ENCODE measurements at regions of chr22 and their contacts with region 1.

Region 1: GRCh38 chr22:26461188-26461810 is 22.3 kb downstream of the HPS4 start:
- DNase-seq: peak; percentile 56
- H3K4me3 ChIP-seq: no peak overlapping the region
- H3K27ac ChIP-seq: no peak overlapping the region
- H3K4me1 ChIP-seq: no peaks in the 10 kb centered on the region
- H3K27me3 ChIP-seq: no peaks in the 10 kb centered on the region
- CTCF ChIP-seq: peak; percentile 86

Region 2: DNA sequence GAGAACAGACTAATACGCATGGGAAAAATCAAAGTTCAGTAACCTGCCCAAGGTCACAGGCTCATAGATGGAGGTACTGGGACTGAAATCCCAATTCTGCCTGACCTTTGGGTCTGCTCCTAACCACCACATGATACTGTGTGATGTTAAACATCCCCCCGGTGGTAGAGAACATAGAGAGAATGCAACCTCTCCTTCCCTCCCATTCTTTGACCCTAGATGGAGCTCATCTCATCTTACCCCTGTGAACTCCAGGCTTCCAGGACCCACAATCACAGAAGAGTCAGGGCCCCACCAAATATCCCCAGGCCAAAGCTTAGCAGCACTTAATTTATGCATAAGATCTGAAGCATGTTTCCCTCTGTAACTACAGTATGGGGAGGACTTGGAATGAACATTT is 520.8 kb before region 1 on chr22:
- CTCF ChIA-PET with region 1: no interaction called
- POLR2A ChIA-PET with region 1: no interaction called
- intact Hi-C with region 1: no loop called
- DNase-seq: no peak
- H3K4me3 ChIP-seq: no peak overlapping the region
- H3K27ac ChIP-seq: no peak overlapping the region
- H3K4me1 ChIP-seq: no peaks in the 10 kb centered on the region
- H3K27me3 ChIP-seq: peaks cover 14% of the 10 kb centered on the region
- CTCF ChIP-seq: no peak

Region 3: GRCh38 chr22:26364066-26365015 is 97.0 kb before region 1 on chr22:
- CTCF ChIA-PET with region 1: interaction called, 13 read pairs
- POLR2A ChIA-PET with region 1: no interaction called
- intact Hi-C with region 1: no loop called
- DNase-seq: peak; percentile 87
- H3K4me3 ChIP-seq: no peak overlapping the region
- H3K27ac ChIP-seq: no peak overlapping the region
- H3K4me1 ChIP-seq: peaks cover 11% of the 10 kb centered on the region
- H3K27me3 ChIP-seq: peaks cover 12% of the 10 kb centered on the region
- CTCF ChIP-seq: peak; percentile 74

Region 4: GRCh38 chr22:26391623-26392022 is 69.7 kb before region 1 on chr22:
- CTCF ChIA-PET with region 1: interaction called, 11 read pairs
- POLR2A ChIA-PET with region 1: no interaction called
- intact Hi-C with region 1: no loop called
- DNase-seq: no peak
- H3K4me3 ChIP-seq: no peak overlapping the region
- H3K27ac ChIP-seq: no peak overlapping the region
- H3K4me1 ChIP-seq: no peaks in the 10 kb centered on the region
- H3K27me3 ChIP-seq: no peaks in the 10 kb centered on the region
- CTCF ChIP-seq: no peak

Region 5: GRCh38 chr22:26398741-26399153 is 62.6 kb before region 1 on chr22:
- CTCF ChIA-PET with region 1: interaction called, 3 read pairs
- POLR2A ChIA-PET with region 1: no interaction called
- intact Hi-C with region 1: loop called (anchors 1 kb)
- DNase-seq: peak; percentile 70
- H3K4me3 ChIP-seq: no peak overlapping the region
- H3K27ac ChIP-seq: no peak overlapping the region
- H3K4me1 ChIP-seq: no peaks in the 10 kb centered on the region
- H3K27me3 ChIP-seq: no peaks in the 10 kb centered on the region
- CTCF ChIP-seq: peak; percentile 72

Region 6: GRCh38 chr22:26416670-26417250 is 44.5 kb before region 1 on chr22:
- CTCF ChIA-PET with region 1: no interaction called
- POLR2A ChIA-PET with region 1: no interaction called
- intact Hi-C with region 1: no loop called
- DNase-seq: peak; percentile 17
- H3K4me3 ChIP-seq: no peak overlapping the region
- H3K27ac ChIP-seq: no peak overlapping the region
- H3K4me1 ChIP-seq: no peaks in the 10 kb centered on the region
- H3K27me3 ChIP-seq: peaks cover 66% of the 10 kb centered on the region
- CTCF ChIP-seq: no peak

Region 7: DNA sequence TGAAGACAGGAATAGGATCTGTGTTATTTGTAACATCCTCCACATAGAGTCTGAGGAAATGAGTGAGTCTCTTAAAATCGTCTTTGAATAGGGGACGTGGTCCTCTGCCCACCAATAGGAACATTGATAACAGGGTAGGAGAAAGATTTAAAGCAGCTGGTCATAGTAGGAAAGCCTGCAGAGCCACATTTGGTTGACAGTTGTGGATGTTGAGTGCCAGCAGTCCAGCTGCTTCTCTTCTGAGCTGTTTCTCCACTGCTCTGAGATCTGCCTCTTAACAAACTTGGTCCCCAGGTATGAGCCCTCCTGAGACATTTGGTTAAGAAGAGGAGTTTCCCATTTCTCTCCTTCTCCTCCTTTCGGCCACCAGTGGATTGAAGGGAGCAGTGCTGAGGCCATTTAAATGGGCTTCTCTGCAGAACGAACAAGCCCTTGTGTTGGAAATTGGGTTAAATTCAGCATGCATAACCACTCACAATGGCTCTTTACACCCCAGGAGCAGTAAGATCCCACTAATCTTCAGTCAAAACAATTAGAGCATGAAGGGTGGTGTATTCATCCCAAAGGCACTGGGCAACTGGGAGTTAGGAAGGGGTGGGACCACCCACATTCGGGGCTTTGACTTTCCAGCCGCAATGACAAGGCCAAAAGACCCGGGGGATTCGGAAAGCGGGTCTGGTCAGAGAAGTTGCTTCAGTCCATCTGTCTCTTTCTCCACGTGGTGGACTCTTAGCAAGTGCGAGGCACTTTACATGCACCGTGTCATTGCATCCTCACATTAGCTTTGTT is 228.4 kb after region 1 on chr22:
- CTCF ChIA-PET with region 1: no interaction called
- POLR2A ChIA-PET with region 1: no interaction called
- intact Hi-C with region 1: no loop called
- DNase-seq: no peak
- H3K4me3 ChIP-seq: no peak overlapping the region
- H3K27ac ChIP-seq: no peak overlapping the region
- H3K4me1 ChIP-seq: no peaks in the 10 kb centered on the region
- H3K27me3 ChIP-seq: no peaks in the 10 kb centered on the region
- CTCF ChIP-seq: no peak